Activated CD4-positive, alpha-beta memory T cell treated with anti-CD3 and anti-CD28 coated beads for 36 hours (primary cell): ENCODE measurements at regions of chr1 and their contacts with region 1.

Region 1: GRCh38 chr1:198771563-198772153 is 132.8 kb downstream of the PTPRC start:
- DNase-seq: no peak
- H3K4me3 Mint-ChIP-seq: no peak overlapping the region
- H3K27ac Mint-ChIP-seq: no peak overlapping the region
- H3K4me1 Mint-ChIP-seq: peaks cover 3% of the 10 kb centered on the region
- H3K27me3 Mint-ChIP-seq: no peaks in the 10 kb centered on the region

Region 2: DNA sequence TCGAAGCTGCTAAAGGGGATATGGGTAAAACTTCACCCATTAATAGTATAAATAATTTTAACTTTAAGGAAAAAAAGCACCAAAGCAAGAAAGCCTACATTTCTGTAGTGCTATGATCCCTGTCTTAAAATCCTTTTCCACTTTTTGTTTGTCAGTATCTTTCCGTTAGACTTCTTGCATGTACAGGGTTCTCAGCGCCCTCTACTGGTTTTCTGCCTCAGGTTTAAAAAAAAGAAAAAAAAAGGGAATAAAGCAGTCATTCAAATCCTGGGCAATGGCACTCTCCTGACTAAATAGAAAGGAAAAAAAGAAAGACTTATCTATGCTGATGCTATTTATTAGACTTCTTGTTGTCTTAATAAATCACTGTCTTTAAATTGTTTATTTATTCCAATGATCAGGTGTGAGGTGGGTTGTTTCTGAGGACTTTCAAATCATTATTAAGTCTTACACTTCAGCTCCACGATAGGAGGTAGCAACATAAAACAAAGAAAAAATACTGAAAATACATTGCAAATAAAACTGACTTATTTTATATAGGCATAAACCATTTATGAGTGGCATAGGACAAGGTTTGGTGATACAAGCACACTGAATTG is 780.4 kb after region 1 on chr1:
- CTCF ChIA-PET with region 1: no interaction called
- POLR2A ChIA-PET with region 1: no interaction called
- intact Hi-C with region 1: loop called (anchors 2 kb)
- DNase-seq: peak; percentile 21
- H3K4me3 Mint-ChIP-seq: no peak overlapping the region
- H3K27ac Mint-ChIP-seq: no peak overlapping the region
- H3K4me1 Mint-ChIP-seq: no peaks in the 10 kb centered on the region
- H3K27me3 Mint-ChIP-seq: peaks cover 8% of the 10 kb centered on the region

Region 3: GRCh38 chr1:200128944-200129885 is 1357.6 kb after region 1 on chr1:
- CTCF ChIA-PET with region 1: no interaction called
- POLR2A ChIA-PET with region 1: no interaction called
- intact Hi-C with region 1: loop called (anchors 5 kb)
- DNase-seq: peak; percentile 17
- H3K4me3 Mint-ChIP-seq: no peak overlapping the region
- H3K27ac Mint-ChIP-seq: no peak overlapping the region
- H3K4me1 Mint-ChIP-seq: peaks cover 16% of the 10 kb centered on the region
- H3K27me3 Mint-ChIP-seq: no peaks in the 10 kb centered on the region